ENCODE measurements at regions of chr16 and their contacts with region 1.

Region 1: DNA sequence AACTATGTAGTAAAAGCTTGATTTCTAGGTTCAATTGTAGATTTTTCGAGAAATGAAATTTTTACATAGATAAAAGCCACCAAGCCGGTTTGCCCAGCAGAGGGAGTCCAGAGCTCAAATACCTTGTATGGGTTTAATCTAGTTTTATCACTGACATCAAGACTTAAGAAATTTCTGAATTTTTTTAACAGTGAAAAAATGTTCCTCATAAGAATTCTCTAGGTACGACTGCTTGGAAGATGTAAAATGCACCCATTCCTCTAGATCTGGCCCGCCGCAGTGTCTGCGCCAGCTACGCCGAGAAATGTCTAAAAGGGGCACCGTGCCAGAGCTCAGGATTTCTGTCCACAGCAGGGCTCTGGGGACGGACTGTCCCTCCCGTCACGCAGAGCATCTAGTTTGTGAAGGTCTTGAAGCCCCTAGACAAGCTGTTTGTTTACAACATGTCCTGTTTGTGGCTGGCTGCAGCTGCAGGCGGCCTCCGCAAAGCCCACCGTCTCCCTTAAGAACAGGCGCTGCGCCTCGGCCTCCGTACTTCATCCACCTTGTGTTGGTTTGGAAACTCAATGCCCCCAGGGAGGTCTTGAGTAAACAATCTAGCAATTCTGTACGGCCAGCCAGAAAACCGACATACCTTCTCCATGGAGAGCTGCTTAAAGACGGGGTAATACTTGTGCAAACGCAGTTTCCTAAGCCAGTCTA is 24.8 kb downstream of the MAP1LC3B start:
- DNase-seq: peak in 9 of 14 experiments; percentile 13 to 57 (median 30)
- ATAC-seq: no peak
- H3K4me3 ChIP-seq: no peak overlapping the region
- H3K4me3 Mint-ChIP-seq: no peak overlapping the region
- H3K27ac ChIP-seq: no peak overlapping the region
- H3K27ac Mint-ChIP-seq: no peak overlapping the region
- H3K4me1 ChIP-seq: no peaks in the 10 kb centered on the region
- H3K4me1 Mint-ChIP-seq: no peaks in the 10 kb centered on the region
- H3K27me3 ChIP-seq: no peaks in the 10 kb centered on the region
- H3K27me3 Mint-ChIP-seq: no peaks in the 10 kb centered on the region
- CTCF ChIP-seq: peak; percentile 53

Region 2: DNA sequence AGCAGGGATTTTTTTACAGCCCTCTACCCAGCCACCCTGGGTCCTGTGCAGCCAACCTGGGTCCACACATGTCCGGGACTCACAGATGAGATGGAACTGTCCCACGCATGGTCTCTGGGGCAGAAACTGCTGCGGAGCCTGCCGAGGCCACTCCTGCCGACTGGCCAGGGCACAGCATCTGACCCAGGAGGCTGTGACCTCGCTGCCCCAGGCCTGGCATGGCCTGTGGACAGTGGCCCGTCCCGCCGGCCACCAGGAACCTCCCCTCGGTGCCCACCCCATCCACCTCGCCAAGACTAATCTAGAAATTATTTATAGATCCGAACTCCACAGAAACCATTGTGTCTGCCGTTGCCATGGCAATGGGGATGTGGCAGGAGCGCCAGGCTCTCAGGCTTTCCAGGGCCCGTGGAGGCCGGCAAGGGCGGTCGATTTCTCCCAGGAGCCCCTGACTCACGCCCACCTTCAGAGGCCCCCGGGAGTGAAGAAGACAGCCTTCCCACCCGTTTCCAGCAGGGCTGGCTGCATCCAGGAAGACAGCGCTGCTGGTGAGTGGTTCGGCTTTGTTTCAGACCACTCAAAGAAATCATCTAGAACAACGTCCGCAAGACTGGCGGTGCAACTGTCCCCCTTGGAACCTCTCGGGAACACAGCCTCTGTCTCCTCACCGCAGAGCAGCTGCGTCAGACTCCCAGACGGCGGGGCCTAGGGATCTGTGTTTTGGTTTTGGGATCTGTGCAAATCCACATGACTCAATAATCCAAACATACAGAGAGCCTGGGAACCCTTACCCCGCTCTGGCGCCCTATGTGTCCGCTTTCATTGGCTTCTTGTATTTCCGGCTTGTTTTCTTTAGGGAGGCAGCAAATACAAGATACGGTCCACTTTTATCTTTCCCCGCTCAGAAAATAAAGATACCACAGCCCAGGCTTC is 124.2 kb after region 1 on chr16:
- CTCF ChIA-PET with region 1: interaction called, 3 read pairs
- POLR2A ChIA-PET with region 1: no interaction called
- intact Hi-C with region 1: loop called in 1 of 2 experiments (anchors 10 kb)
- DNase-seq: no peak
- ATAC-seq: no peak
- H3K4me3 ChIP-seq: no peak overlapping the region
- H3K4me3 Mint-ChIP-seq: no peak overlapping the region
- H3K27ac ChIP-seq: no peak overlapping the region
- H3K27ac Mint-ChIP-seq: no peak overlapping the region
- H3K4me1 ChIP-seq: peaks cover 5% of the 10 kb centered on the region
- H3K4me1 Mint-ChIP-seq: peaks cover 4% of the 10 kb centered on the region
- H3K27me3 ChIP-seq: peaks cover 0 to 13% of the 10 kb centered on the region in 2 experiments
- H3K27me3 Mint-ChIP-seq: peaks cover 60% of the 10 kb centered on the region
- CTCF ChIP-seq: no peak

Region 3: GRCh38 chr16:87918866-87919680 is 502.1 kb after region 1 on chr16:
- CTCF ChIA-PET with region 1: no interaction called
- POLR2A ChIA-PET with region 1: no interaction called
- intact Hi-C with region 1: loop called in 1 of 2 experiments (anchors 5 kb)
- DNase-seq: no peak
- ATAC-seq: no peak
- H3K4me3 ChIP-seq: no peak overlapping the region
- H3K4me3 Mint-ChIP-seq: no peak overlapping the region
- H3K27ac ChIP-seq: no peak overlapping the region
- H3K27ac Mint-ChIP-seq: no peak overlapping the region
- H3K4me1 ChIP-seq: no peaks in the 10 kb centered on the region
- H3K4me1 Mint-ChIP-seq: no peaks in the 10 kb centered on the region
- H3K27me3 ChIP-seq: no peaks in the 10 kb centered on the region
- H3K27me3 Mint-ChIP-seq: no peaks in the 10 kb centered on the region
- CTCF ChIP-seq: no peak